Naive thymus-derived CD4-positive, alpha-beta T cell (primary cell): ENCODE measurements at regions of chr20 and their contacts with region 1.

Region 1: DNA sequence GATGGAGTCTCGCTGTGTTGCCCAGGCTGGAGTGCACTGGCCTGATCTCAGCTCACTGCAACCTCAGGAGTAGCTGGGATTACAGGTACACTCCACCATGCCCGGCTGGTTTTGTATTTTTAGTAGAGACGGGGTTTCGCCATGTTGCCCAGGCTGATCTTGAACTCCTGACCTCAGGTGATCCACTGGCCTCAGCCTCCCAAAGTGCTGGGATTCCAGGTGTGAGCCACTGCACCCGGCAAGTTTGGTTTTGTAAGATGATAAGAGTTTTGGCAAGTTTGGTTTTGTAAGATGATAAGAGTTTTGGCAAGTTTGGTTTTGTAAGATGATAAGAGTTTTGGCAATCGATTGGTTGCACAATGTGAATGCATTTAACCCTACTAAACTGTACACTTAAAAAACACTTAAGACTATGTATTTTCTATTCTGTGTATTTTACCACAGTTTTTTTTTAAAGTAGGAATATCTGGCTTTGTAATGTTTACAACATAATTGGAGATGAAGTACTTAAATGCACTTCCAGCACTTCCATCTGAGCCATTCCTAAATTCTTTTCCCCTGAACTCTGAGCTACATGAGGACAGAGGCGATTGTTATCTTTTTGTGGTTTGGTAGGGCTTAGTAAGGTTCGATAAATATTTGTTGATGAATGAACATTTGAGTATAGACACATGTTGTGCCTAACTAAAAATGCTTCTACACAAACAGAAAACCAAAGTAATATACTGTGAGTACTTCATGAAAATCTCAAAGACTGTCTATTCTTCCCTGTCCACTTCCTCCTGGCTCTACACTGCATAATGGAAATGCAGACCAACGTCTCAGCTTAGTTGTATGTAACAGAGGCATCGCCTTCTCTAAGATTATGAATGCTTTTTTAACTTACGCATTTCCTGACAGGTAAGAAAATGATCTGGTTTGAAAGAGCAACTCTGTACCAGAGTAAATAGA is 18.8 kb downstream of the SAMHD1 start:
- DNase-seq: no peak
- ATAC-seq: no peak
- H3K4me3 ChIP-seq: no peak overlapping the region
- H3K4me3 Mint-ChIP-seq: peak overlapping the region in 8 of 10 donors; percentile 7 to 87 (median 48)
- H3K27ac ChIP-seq: peak overlapping the region; percentile 34
- H3K27ac Mint-ChIP-seq: peak overlapping the region; percentile 71 to 99 (median 96)
- H3K4me1 ChIP-seq: peaks cover 47 to 64% of the 10 kb centered on the region in 2 donors
- H3K4me1 Mint-ChIP-seq: peaks cover 18 to 83% (median 61%) of the 10 kb centered on the region in 7 donors
- H3K27me3 ChIP-seq: no peaks in the 10 kb centered on the region
- H3K27me3 Mint-ChIP-seq: no peaks in the 10 kb centered on the region

Region 2: DNA sequence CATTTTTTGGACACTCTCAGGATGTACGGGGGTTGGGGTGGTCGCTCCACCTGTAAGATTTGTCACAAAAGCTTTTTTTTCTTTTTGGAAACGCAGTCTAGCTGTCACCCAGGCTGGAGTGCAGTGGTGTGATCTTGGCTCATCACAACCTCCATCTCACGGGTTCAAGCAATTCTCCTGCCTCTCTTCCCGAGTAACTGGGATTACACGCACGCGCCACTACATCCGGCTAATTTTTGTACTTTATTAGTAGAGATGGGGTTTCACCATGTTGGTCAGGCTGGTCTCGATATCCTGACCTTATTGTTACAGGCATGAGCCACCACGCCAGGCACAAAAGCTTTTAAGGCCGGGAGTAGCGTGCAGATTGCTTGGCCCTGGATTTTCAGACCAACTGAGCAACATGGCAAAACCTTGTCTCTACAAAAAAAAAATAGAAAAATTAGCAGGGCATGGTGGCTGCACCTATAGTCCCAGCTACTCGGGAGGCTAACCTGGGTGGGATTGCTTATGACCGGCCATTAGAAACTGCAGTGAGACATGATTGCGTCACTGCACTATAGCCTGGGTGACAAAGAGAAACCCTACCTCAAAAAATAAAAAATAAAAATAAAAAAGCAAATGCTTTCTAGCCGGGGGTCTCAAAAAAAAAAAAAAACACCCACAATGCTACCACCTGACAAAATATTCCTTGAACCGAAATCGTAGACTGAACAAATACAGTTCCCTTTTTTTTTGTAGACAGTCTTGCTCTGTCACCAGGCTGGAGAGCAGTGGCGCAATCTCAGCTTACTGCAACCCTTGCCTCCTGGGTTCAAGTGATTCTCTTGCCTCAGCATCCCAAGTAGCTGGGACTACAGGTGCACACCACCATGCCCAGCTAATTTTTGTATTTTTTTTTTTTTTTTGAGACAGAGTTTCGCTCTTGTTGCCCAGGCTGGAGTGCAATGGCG is 1205.7 kb before region 1 on chr20:
- CTCF ChIA-PET with region 1: no interaction called
- POLR2A ChIA-PET with region 1: no interaction called
- intact Hi-C with region 1: loop called in 1 of 2 experiments (anchors 5 kb)
- DNase-seq: no peak
- ATAC-seq: no peak
- H3K4me3 ChIP-seq: no peak overlapping the region
- H3K4me3 Mint-ChIP-seq: peak overlapping the region in 1 of 10 donors; percentile 8
- H3K27ac ChIP-seq: no peak overlapping the region
- H3K27ac Mint-ChIP-seq: peak overlapping the region in 2 of 9 donors; percentile 26 to 43
- H3K4me1 ChIP-seq: peaks cover 19 to 35% of the 10 kb centered on the region in 2 donors
- H3K4me1 Mint-ChIP-seq: peaks cover 15 to 67% (median 46%) of the 10 kb centered on the region in 7 donors
- H3K27me3 ChIP-seq: no peaks in the 10 kb centered on the region
- H3K27me3 Mint-ChIP-seq: no peaks in the 10 kb centered on the region

Region 3: DNA sequence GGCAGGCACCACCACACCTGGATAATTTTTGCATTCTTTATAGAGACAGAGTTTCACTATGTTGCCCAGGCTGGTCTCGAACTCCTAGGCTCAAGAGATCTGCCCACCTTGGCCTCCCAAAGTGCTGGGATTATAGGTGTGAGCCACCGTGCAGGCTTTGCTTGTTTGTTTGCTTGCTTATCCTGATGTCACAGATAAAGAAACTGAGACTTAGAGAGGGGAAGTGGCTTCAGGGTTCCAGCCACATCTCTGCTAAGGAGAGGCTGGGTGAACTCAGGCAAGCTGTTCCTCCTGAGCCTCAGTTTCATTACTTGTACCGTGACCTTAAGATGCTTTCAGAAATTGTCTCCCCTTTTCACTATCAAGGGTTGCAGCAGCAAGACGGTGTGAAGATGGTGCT is 105.3 kb before region 1 on chr20:
- CTCF ChIA-PET with region 1: no interaction called
- POLR2A ChIA-PET with region 1: no interaction called
- intact Hi-C with region 1: no loop called
- DNase-seq: no peak
- ATAC-seq: no peak
- H3K4me3 ChIP-seq: no peak overlapping the region
- H3K4me3 Mint-ChIP-seq: peak overlapping the region in 1 of 10 donors; percentile 68
- H3K27ac ChIP-seq: no peak overlapping the region
- H3K27ac Mint-ChIP-seq: peak overlapping the region in 1 of 9 donors; percentile 69
- H3K4me1 ChIP-seq: no peaks in the 10 kb centered on the region
- H3K4me1 Mint-ChIP-seq: peaks cover 0 to 23% (median 0%) of the 10 kb centered on the region in 7 donors
- H3K27me3 ChIP-seq: no peaks in the 10 kb centered on the region
- H3K27me3 Mint-ChIP-seq: no peaks in the 10 kb centered on the region

Region 4: GRCh38 chr20:36919715-36920333 is 12.9 kb before region 1 on chr20:
- CTCF ChIA-PET with region 1: interaction called, 6 read pairs
- POLR2A ChIA-PET with region 1: interaction called, 37 read pairs
- intact Hi-C with region 1: no loop called
- DNase-seq: peak in 7 of 9 donors; percentile 43 to 73 (median 67)
- ATAC-seq: peak; percentile 90
- H3K4me3 ChIP-seq: no peak overlapping the region
- H3K4me3 Mint-ChIP-seq: peak overlapping the region in 5 of 10 donors; percentile 2 to 34 (median 26)
- H3K27ac ChIP-seq: peak overlapping the region; percentile 47
- H3K27ac Mint-ChIP-seq: peak overlapping the region; percentile 56 to 98 (median 75)
- H3K4me1 ChIP-seq: peaks cover 0 to 30% of the 10 kb centered on the region in 2 donors
- H3K4me1 Mint-ChIP-seq: peaks cover 15 to 44% (median 24%) of the 10 kb centered on the region in 7 donors
- H3K27me3 ChIP-seq: no peaks in the 10 kb centered on the region
- H3K27me3 Mint-ChIP-seq: no peaks in the 10 kb centered on the region

Region 5: DNA sequence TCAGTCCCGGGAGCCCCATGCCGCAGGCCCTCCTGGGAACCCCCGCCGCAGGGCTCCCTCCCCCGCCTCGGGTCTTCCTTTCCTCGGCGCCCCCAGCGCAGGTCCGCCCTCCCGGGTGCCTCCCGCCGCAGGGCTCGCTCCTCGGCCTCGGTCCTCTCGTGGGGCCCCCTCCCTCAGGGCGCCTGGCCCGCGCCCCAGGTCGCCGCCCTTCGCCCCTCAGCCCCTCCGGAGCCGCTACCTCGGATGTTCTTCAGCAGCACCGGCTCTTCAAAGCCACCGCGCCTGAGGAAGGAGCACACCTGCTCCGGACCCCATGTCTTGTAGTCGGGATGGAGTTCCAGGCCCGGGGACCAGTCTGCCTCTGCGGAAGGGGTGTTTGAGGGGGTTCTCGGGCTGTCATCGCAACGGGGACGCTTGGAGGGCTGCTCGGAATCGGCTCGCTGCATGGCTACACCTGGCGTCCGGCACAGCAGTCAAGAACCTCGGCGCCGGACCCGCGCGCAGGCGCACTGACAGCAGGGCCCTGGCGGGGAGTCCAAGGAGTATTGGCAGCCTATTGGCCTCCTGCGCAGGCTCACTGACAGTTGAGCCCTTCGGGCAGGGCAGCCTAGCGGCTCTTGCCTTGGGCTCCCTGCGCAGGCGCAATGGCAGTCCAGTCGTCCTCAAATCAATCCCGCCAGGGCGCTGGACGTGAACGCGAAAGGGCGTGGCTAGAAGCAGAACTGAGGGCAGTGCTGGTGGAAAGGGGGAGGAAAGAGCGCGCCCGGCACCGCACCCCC is 18.6 kb after region 1 on chr20 and contains the start of gene SAMHD1:
- CTCF ChIA-PET with region 1: interaction called, 6 read pairs
- POLR2A ChIA-PET with region 1: interaction called, 20 read pairs
- intact Hi-C with region 1: loop called in 1 of 2 experiments (anchors 2 kb)
- DNase-seq: peak; percentile 72 to 93 (median 81)
- ATAC-seq: peak; percentile 86
- H3K4me3 ChIP-seq: peak within 1 kb of the TSS; percentile 94
- H3K4me3 Mint-ChIP-seq: peak within 1 kb of the TSS; percentile 93 to 99 (median 98)
- H3K27ac ChIP-seq: peak within 1 kb of the TSS; percentile 97
- H3K27ac Mint-ChIP-seq: peak within 1 kb of the TSS; percentile 96 to 99 (median 98)
- H3K4me1 ChIP-seq: peaks cover 40 to 45% of the 10 kb centered on the region in 2 donors
- H3K4me1 Mint-ChIP-seq: peaks cover 28 to 50% (median 37%) of the 10 kb centered on the region in 7 donors
- H3K27me3 ChIP-seq: no peaks in the 10 kb centered on the region
- H3K27me3 Mint-ChIP-seq: no peaks in the 10 kb centered on the region
- total RNA-seq, gene SAMHD1: 271 to 393 (median 338) TPM

Region 6: GRCh38 chr20:37081717-37082289 is 149.1 kb after region 1 on chr20:
- CTCF ChIA-PET with region 1: interaction called, 3 read pairs
- POLR2A ChIA-PET with region 1: interaction called, 3 read pairs
- intact Hi-C with region 1: loop called in 1 of 2 experiments (anchors 2 kb)
- DNase-seq: peak in 7 of 9 donors; percentile 21 to 64 (median 54)
- ATAC-seq: peak; percentile 61
- H3K4me3 ChIP-seq: no peak overlapping the region
- H3K4me3 Mint-ChIP-seq: peak overlapping the region in 3 of 10 donors; percentile 5 to 42 (median 17)
- H3K27ac ChIP-seq: no peak overlapping the region
- H3K27ac Mint-ChIP-seq: peak overlapping the region; percentile 62 to 89 (median 82)
- H3K4me1 ChIP-seq: peaks cover 12% of the 10 kb centered on the region in 2 donors
- H3K4me1 Mint-ChIP-seq: peaks cover 2 to 37% (median 29%) of the 10 kb centered on the region in 7 donors
- H3K27me3 ChIP-seq: no peaks in the 10 kb centered on the region
- H3K27me3 Mint-ChIP-seq: no peaks in the 10 kb centered on the region